ENCODE measurements at regions of chr15 and their contacts with region 1.

Region 1: DNA sequence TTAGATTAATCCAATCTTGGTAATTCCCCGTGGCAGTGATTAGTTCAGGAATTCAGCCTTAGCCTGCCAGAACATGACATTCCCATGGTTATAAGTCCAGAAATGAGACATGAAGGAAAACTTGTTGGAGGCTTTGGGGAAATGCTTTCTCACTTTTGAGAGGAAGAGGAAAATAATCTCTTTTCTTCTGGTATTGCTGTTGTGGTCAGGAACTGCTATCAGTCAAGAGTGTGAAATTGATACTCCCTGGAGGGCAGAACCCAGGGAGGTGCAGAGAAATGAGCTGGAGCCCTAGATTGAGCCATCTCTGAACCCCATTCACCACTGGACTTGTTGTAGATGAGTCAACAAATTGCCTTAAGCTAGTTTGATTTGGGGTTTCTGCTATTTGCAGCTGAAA is 38.6 kb upstream of the APH1B start:
- DNase-seq: no peak
- ATAC-seq: peak; percentile 46
- H3K4me3 ChIP-seq: no peak overlapping the region
- H3K4me3 Mint-ChIP-seq: no peak overlapping the region
- H3K27ac ChIP-seq: no peak overlapping the region
- H3K27ac Mint-ChIP-seq: peak overlapping the region in 1 of 9 donors; percentile 59
- H3K4me1 ChIP-seq: peaks cover 19 to 35% of the 10 kb centered on the region in 2 donors
- H3K4me1 Mint-ChIP-seq: peaks cover 44 to 90% (median 74%) of the 10 kb centered on the region in 7 donors
- H3K27me3 ChIP-seq: no peaks in the 10 kb centered on the region
- H3K27me3 Mint-ChIP-seq: no peaks in the 10 kb centered on the region

Region 2: DNA sequence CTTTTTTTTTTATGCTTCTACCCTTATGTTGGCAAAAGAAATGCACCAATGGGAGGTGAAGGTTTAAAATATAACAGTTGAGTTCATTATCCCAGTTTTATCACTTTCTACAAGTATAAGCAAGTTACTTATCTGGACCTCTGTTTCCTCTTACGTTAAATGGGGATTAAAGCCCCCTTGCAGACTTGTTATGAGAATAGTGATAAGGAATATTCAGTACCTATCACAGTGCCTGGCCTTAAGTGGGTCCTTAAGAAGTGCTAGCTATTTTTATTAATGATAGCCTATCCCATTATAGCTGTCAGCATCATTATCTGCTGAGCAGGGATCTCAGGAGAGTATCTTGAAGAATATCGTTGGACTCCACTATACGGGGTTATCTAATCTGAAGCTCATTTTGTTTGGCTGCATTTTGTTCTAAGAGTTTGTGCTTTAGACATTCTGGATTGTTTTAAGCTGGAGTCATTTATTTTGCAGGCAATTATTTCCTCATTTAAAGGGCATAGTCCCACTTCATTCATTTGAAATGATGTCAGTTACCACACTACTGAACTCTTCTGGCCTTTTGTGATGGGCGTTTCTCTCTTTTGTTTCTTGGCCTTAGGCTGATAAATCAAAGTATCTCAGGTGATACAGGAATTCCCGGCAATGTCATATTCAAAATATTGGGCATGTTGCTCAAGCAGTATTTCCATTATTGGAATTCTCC is 20.5 kb before region 1 on chr15:
- CTCF ChIA-PET with region 1: no interaction called
- POLR2A ChIA-PET with region 1: no interaction called
- intact Hi-C with region 1: loop called in 1 of 2 experiments (anchors 2 kb)
- DNase-seq: no peak
- ATAC-seq: no peak
- H3K4me3 ChIP-seq: no peak overlapping the region
- H3K4me3 Mint-ChIP-seq: peak overlapping the region in 2 of 10 donors; percentile 9 to 60
- H3K27ac ChIP-seq: no peak overlapping the region
- H3K27ac Mint-ChIP-seq: peak overlapping the region in 7 of 9 donors; percentile 6 to 75 (median 60)
- H3K4me1 ChIP-seq: peaks cover 5 to 17% of the 10 kb centered on the region in 2 donors
- H3K4me1 Mint-ChIP-seq: peaks cover 34 to 81% (median 71%) of the 10 kb centered on the region in 7 donors
- H3K27me3 ChIP-seq: no peaks in the 10 kb centered on the region
- H3K27me3 Mint-ChIP-seq: no peaks in the 10 kb centered on the region

Region 3: DNA sequence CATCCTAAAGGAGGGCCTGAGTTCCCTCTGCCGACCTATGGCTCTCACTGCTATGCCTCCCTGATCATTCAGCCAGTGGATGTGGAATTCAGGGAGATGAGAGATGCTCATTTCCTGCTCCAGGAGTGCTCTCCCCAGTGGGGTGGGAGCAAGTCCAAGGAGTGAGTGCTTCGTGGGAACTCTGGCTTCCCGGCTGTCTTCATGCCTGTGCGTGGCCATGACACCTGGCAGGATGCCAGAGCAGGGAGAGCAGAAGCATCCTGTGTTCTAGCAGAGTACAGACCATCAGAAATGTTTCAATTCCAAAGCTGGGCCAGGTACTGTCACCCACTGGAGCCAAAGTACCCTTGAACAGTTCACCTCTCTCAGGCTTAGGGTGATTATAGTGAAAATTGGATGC is 83.7 kb after region 1 on chr15:
- CTCF ChIA-PET with region 1: no interaction called
- POLR2A ChIA-PET with region 1: no interaction called
- intact Hi-C with region 1: no loop called
- DNase-seq: no peak
- ATAC-seq: no peak
- H3K4me3 ChIP-seq: no peak overlapping the region
- H3K4me3 Mint-ChIP-seq: no peak overlapping the region
- H3K27ac ChIP-seq: no peak overlapping the region
- H3K27ac Mint-ChIP-seq: no peak overlapping the region
- H3K4me1 ChIP-seq: no peaks in the 10 kb centered on the region
- H3K4me1 Mint-ChIP-seq: no peaks in the 10 kb centered on the region
- H3K27me3 ChIP-seq: no peaks in the 10 kb centered on the region
- H3K27me3 Mint-ChIP-seq: peaks cover 0 to 4% (median 0%) of the 10 kb centered on the region in 5 donors